ENCODE measurements at regions of chr1 and their contacts with region 1.

Region 1: GRCh38 chr1:59029411-59030145 is 245.7 kb upstream of the JUN start:
- DNase-seq: no peak
- H3K4me3 ChIP-seq: no peak overlapping the region
- H3K27ac ChIP-seq: no peak overlapping the region
- H3K4me1 ChIP-seq: peaks cover 11% of the 10 kb centered on the region
- CTCF ChIP-seq: no peak

Region 2: GRCh38 chr1:58968360-58968952 is 61.1 kb before region 1 on chr1:
- CTCF ChIA-PET with region 1: no interaction called
- POLR2A ChIA-PET with region 1: interaction called, 3 read pairs
- intact Hi-C with region 1: loop called (anchors 1 kb)
- DNase-seq: peak; percentile 90
- H3K4me3 ChIP-seq: peak overlapping the region; percentile 37
- H3K27ac ChIP-seq: peak overlapping the region; percentile 85
- H3K4me1 ChIP-seq: peaks cover 45% of the 10 kb centered on the region
- CTCF ChIP-seq: no peak

Region 3: DNA sequence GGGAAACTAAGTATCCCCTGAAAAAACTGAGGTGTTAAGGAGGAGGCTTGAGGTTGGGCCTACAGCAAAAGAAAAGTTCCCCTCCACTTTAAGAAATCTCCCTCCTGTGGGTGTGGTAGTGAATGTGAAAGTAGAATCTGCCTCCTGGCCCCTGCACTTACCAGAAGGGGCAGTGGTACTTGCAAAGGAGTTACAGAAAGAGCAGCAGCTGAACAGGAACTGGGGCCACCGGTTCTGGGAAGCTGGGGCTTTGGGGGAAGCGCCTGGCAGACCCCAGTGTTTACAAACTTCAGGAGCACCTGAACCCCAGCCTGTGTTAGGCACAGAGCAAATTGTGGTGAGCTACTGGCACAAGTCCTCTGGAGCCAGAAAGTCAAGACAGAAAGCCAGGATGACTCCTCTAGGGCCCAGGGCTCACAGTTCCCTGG is 17.2 kb after region 1 on chr1:
- CTCF ChIA-PET with region 1: no interaction called
- POLR2A ChIA-PET with region 1: no interaction called
- intact Hi-C with region 1: no loop called
- DNase-seq: peak; percentile 5
- H3K4me3 ChIP-seq: no peak overlapping the region
- H3K27ac ChIP-seq: no peak overlapping the region
- H3K4me1 ChIP-seq: no peaks in the 10 kb centered on the region
- CTCF ChIP-seq: no peak

Measured in OCI-LY7 (cell line).